Activated CD8-positive, alpha-beta T cell treated with anti-CD3 and anti-CD28 coated beads, Interleukin-2, amount 10 ng/mL, durations not matched to agents 7 days and 5 days (primary cell): ENCODE measurements at regions of chr10 and their contacts with region 1.

Region 1: GRCh38 chr10:22573820-22574569 is 140.4 kb downstream of the PIP4K2A start:
- DNase-seq: peak; percentile 57
- ATAC-seq: peak; percentile 74
- H3K4me3 Mint-ChIP-seq: peak overlapping the region; percentile 59
- H3K27ac Mint-ChIP-seq: peak overlapping the region; percentile 85
- H3K4me1 Mint-ChIP-seq: peaks cover 50% of the 10 kb centered on the region
- H3K27me3 Mint-ChIP-seq: no peaks in the 10 kb centered on the region

Region 2: DNA sequence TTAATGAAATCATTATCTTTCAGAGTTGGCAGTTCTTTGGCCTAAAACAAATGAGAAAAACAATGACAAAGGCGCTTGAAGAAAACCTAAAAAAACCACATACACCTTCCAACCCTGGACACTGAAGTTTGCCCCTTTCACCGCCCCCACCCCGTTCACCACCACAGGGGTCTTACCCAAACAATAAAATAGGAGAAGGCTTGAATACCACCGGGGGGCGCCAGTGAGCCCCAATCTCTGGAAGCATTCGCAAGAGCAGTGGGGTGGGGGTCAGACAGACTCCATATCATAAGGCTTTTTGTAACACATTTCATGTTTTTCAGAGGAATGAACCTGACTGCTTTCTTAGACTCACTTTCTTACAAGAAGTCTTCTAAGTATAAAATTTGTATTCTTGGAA is 23.3 kb before region 1 on chr10:
- CTCF ChIA-PET with region 1: interaction called, 12 read pairs
- POLR2A ChIA-PET with region 1: no interaction called
- DNase-seq: peak; percentile 68
- ATAC-seq: no peak
- H3K4me3 Mint-ChIP-seq: no peak overlapping the region
- H3K27ac Mint-ChIP-seq: no peak overlapping the region
- H3K4me1 Mint-ChIP-seq: peaks cover 21% of the 10 kb centered on the region
- H3K27me3 Mint-ChIP-seq: no peaks in the 10 kb centered on the region

Region 3: DNA sequence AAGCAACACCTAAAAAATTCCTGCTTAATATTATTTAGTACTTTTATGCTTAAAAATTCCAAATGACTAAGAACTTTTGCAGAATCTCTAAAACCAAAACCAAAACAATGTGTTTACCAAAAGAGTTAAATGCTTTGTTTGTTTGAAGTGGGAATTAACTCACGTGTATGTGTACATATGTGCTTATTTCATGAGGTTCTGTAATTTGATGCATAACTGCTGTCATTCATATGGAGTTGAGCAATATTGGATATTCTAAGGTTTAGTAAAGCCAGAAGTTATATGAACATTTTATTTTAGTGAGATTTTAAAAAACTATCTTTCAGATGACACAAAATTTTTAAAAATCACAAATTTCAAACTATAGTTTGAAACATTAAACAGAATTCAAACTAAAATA is 16.7 kb before region 1 on chr10:
- CTCF ChIA-PET with region 1: interaction called, 11 read pairs
- POLR2A ChIA-PET with region 1: no interaction called
- DNase-seq: no peak
- ATAC-seq: no peak
- H3K4me3 Mint-ChIP-seq: no peak overlapping the region
- H3K27ac Mint-ChIP-seq: no peak overlapping the region
- H3K4me1 Mint-ChIP-seq: no peaks in the 10 kb centered on the region
- H3K27me3 Mint-ChIP-seq: no peaks in the 10 kb centered on the region

Region 4: GRCh38 chr10:22615819-22616499 is 42.0 kb after region 1 on chr10:
- CTCF ChIA-PET with region 1: interaction called, 10 read pairs
- POLR2A ChIA-PET with region 1: interaction called, 3 read pairs
- DNase-seq: no peak
- ATAC-seq: peak; percentile 20
- H3K4me3 Mint-ChIP-seq: peak overlapping the region; percentile 67
- H3K27ac Mint-ChIP-seq: peak overlapping the region; percentile 70
- H3K4me1 Mint-ChIP-seq: peaks cover 96% of the 10 kb centered on the region
- H3K27me3 Mint-ChIP-seq: no peaks in the 10 kb centered on the region

Region 5: GRCh38 chr10:22648547-22648961 is 74.6 kb after region 1 on chr10:
- CTCF ChIA-PET with region 1: interaction called, 11 read pairs
- POLR2A ChIA-PET with region 1: no interaction called
- DNase-seq: no peak
- ATAC-seq: no peak
- H3K4me3 Mint-ChIP-seq: peak overlapping the region; percentile 71
- H3K27ac Mint-ChIP-seq: peak overlapping the region; percentile 79
- H3K4me1 Mint-ChIP-seq: peaks cover 95% of the 10 kb centered on the region
- H3K27me3 Mint-ChIP-seq: no peaks in the 10 kb centered on the region

Region 6: GRCh38 chr10:22655311-22655981 is 81.5 kb after region 1 on chr10:
- CTCF ChIA-PET with region 1: interaction called, 12 read pairs
- POLR2A ChIA-PET with region 1: no interaction called
- DNase-seq: peak; percentile 41
- ATAC-seq: peak; percentile 42
- H3K4me3 Mint-ChIP-seq: peak overlapping the region; percentile 64
- H3K27ac Mint-ChIP-seq: peak overlapping the region; percentile 91
- H3K4me1 Mint-ChIP-seq: peaks cover 96% of the 10 kb centered on the region
- H3K27me3 Mint-ChIP-seq: no peaks in the 10 kb centered on the region

Region 7: DNA sequence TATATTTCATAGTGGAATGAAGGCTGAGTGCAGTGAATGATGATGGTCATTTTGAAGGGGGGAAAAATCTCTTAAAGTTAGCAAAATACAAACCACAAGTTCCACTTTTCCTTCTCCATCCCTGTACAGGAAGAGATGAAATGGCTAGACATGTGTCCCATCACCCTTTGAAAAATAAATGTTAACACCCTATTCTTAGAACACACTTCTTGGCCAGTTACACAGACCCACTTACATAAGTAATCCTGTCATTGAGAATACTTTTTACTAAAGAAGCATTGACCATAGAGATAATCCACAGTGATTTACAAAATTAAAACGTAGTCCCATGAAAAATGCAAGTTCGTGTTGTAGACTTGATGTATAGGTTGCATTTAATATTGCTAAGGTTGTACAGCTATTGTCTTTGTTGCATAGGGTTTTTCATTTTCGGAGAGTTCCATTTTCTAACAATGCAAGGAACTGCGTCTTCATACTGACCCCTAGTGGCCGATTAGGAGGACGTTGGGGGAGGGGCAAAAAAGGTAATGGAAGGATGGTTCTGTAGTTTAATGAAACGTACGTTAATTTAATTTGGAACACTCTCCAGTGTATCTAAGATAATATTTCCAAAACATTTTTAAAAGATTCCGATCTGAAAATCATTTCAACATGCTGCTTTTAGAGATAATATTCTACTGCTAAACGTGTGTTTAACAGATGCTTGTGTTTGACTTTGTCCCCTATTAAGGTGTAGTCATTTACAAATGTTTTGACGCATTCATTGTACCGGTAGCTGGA is 414.8 kb after region 1 on chr10:
- CTCF ChIA-PET with region 1: interaction called, 44 read pairs
- POLR2A ChIA-PET with region 1: no interaction called
- DNase-seq: peak; percentile 78
- ATAC-seq: peak; percentile 71
- H3K4me3 Mint-ChIP-seq: no peak overlapping the region
- H3K27ac Mint-ChIP-seq: no peak overlapping the region
- H3K4me1 Mint-ChIP-seq: peaks cover 21% of the 10 kb centered on the region
- H3K27me3 Mint-ChIP-seq: peaks cover 11% of the 10 kb centered on the region